GM12878 (cell line): ENCODE measurements at regions of chr21 and their contacts with region 1.

Region 1: GRCh38 chr21:25487046-25487594 is 120.2 kb downstream of the MRPL39 start:
- DNase-seq: peak; percentile 96
- ATAC-seq: peak; percentile 80
- H3K4me3 ChIP-seq: peak overlapping the region; percentile 11
- H3K27ac ChIP-seq: peak overlapping the region; percentile 85
- H3K4me1 ChIP-seq: peaks cover 46% of the 10 kb centered on the region
- H3K27me3 ChIP-seq: no peaks in the 10 kb centered on the region
- CTCF ChIP-seq: no peak
- EP300 ChIP-seq: peak; percentile 97 to 98
- POLR2A ChIP-seq: no peak
- RAD21 ChIP-seq: peak; percentile 37; the same call in 1 of the 2 replicates

Region 2: DNA sequence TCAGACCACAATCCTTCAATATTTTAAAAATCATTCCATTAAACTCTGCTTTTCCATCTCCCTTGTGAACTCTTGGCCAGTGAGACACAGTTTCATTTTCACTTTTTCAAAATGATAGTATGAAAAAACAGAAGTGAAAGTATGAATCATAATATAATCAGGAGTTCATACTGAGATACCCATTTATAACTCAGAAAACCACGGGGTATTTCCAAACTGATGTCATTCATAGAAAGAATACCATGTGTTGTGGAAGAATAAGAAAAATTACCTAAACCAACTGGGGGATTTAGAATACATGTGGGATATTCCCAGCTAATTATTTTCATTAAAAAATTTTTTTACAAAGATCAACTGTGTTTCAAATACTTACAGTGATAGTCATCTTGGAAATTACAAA is 29.7 kb before region 1 on chr21:
- CTCF ChIA-PET with region 1: interaction called, 5 read pairs
- POLR2A ChIA-PET with region 1: interaction called, 4 read pairs
- RAD21 ChIA-PET with region 1: interaction called, 20 read pairs
- SMC1A ChIA-PET with region 1: interaction called, 30 read pairs
- in situ Hi-C with region 1: no loop called
- intact Hi-C with region 1: loop called (anchors 1 kb)
- DNase-seq: peak; percentile 83
- ATAC-seq: peak; percentile 60
- H3K4me3 ChIP-seq: no peak overlapping the region
- H3K27ac ChIP-seq: peak overlapping the region; percentile 98
- H3K4me1 ChIP-seq: peaks cover 52% of the 10 kb centered on the region
- H3K27me3 ChIP-seq: no peaks in the 10 kb centered on the region
- CTCF ChIP-seq: no peak
- EP300 ChIP-seq: peak; percentile 100
- POLR2A ChIP-seq: no peak
- RAD21 ChIP-seq: peak; percentile 25; the same call in 1 of the 2 replicates

Region 3: DNA sequence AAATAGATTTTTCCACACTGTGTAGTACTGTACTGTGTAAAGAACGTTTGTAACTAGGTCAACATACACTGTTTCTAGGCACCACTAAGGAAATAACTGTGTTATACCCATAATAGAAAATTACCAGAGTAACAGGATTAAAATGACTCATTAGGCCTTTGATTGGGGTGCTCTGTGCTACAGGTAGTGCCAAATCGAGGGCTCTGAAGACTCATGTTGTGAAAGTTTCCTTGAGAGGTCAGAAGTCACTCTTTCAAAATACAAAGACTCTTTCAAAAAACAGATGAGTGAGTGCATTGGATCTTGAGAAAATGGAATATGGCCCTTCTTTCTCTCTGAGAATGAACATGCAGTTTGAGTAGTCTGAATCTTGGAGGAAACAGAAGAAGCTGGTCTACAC is 22.8 kb before region 1 on chr21:
- CTCF ChIA-PET with region 1: interaction called, 5 read pairs
- POLR2A ChIA-PET with region 1: interaction called, 4 read pairs
- RAD21 ChIA-PET with region 1: interaction called, 8 read pairs
- SMC1A ChIA-PET with region 1: interaction called, 39 read pairs
- in situ Hi-C with region 1: no loop called
- intact Hi-C with region 1: loop called (anchors 1 kb)
- DNase-seq: no peak
- ATAC-seq: peak; percentile 76
- H3K4me3 ChIP-seq: peak overlapping the region; percentile 22; the same call in 1 of the 2 replicates
- H3K27ac ChIP-seq: peak overlapping the region; percentile 87
- H3K4me1 ChIP-seq: peaks cover 41% of the 10 kb centered on the region
- H3K27me3 ChIP-seq: no peaks in the 10 kb centered on the region
- CTCF ChIP-seq: no peak
- EP300 ChIP-seq: peak; percentile 69 to 94; a peak in 3 of 4 replicates
- POLR2A ChIP-seq: no peak
- RAD21 ChIP-seq: no peak

Region 4: GRCh38 chr21:25501996-25502665 is 15.0 kb after region 1 on chr21:
- CTCF ChIA-PET with region 1: interaction called, 11 read pairs
- POLR2A ChIA-PET with region 1: interaction called, 18 read pairs
- RAD21 ChIA-PET with region 1: interaction called, 18 read pairs
- SMC1A ChIA-PET with region 1: interaction called, 61 read pairs
- in situ Hi-C with region 1: no loop called
- intact Hi-C with region 1: loop called (anchors 1 kb)
- DNase-seq: peak; percentile 87
- ATAC-seq: peak; percentile 78
- H3K4me3 ChIP-seq: no peak overlapping the region
- H3K27ac ChIP-seq: peak overlapping the region; percentile 83
- H3K4me1 ChIP-seq: peaks cover 31% of the 10 kb centered on the region
- H3K27me3 ChIP-seq: no peaks in the 10 kb centered on the region
- CTCF ChIP-seq: no peak
- EP300 ChIP-seq: peak; percentile 8 to 26; a peak in 2 of 4 replicates
- POLR2A ChIP-seq: no peak
- RAD21 ChIP-seq: peak; percentile 17; the same call in 1 of the 2 replicates

Region 5: DNA sequence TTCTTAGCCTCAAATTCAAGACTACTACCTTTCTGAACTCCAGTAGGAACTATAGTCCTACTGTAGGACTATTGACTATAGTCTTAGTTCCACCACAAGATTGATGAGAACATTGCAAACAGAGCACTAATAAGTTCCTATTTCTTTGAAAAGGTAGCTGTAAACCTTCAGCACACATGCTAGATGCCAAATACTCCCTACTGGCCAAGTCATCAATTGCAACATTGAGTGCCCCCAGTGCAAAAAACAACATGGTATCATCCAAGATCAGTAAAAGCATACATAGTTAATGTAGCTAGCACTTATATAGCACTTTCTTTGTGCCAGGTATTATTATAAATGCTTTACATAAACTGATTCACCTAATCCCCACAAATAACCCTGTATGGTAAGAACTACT is 20.4 kb after region 1 on chr21:
- CTCF ChIA-PET with region 1: interaction called, 4 read pairs
- POLR2A ChIA-PET with region 1: interaction called, 18 read pairs
- RAD21 ChIA-PET with region 1: interaction called, 16 read pairs
- SMC1A ChIA-PET with region 1: interaction called, 61 read pairs
- in situ Hi-C with region 1: no loop called
- intact Hi-C with region 1: loop called (anchors 1 kb)
- DNase-seq: no peak
- ATAC-seq: peak; percentile 57
- H3K4me3 ChIP-seq: no peak overlapping the region
- H3K27ac ChIP-seq: peak overlapping the region; percentile 95
- H3K4me1 ChIP-seq: peaks cover 41% of the 10 kb centered on the region
- H3K27me3 ChIP-seq: no peaks in the 10 kb centered on the region
- CTCF ChIP-seq: peak; percentile 19 to 52 (median 31); a peak in 4 of 6 replicates
- EP300 ChIP-seq: no peak
- POLR2A ChIP-seq: no peak
- RAD21 ChIP-seq: peak; percentile 60

Region 6: GRCh38 chr21:25568246-25568645 is 81.1 kb after region 1 on chr21:
- CTCF ChIA-PET with region 1: no interaction called
- POLR2A ChIA-PET with region 1: no interaction called
- RAD21 ChIA-PET with region 1: interaction called, 12 read pairs
- SMC1A ChIA-PET with region 1: interaction called, 17 read pairs
- in situ Hi-C with region 1: no loop called
- intact Hi-C with region 1: no loop called
- DNase-seq: no peak
- ATAC-seq: peak; percentile 12
- H3K4me3 ChIP-seq: peak overlapping the region; percentile 87
- H3K27ac ChIP-seq: peak overlapping the region; percentile 92
- H3K4me1 ChIP-seq: peaks cover 16% of the 10 kb centered on the region; the same call in 1 of the 2 replicates
- H3K27me3 ChIP-seq: no peaks in the 10 kb centered on the region
- CTCF ChIP-seq: no peak
- EP300 ChIP-seq: no peak
- POLR2A ChIP-seq: peak; percentile 88
- RAD21 ChIP-seq: no peak

Region 7: GRCh38 chr21:25573409-25574206 is 86.5 kb after region 1 on chr21:
- CTCF ChIA-PET with region 1: no interaction called
- POLR2A ChIA-PET with region 1: no interaction called
- RAD21 ChIA-PET with region 1: interaction called, 10 read pairs
- SMC1A ChIA-PET with region 1: interaction called, 14 read pairs
- in situ Hi-C with region 1: no loop called
- intact Hi-C with region 1: no loop called
- DNase-seq: peak; percentile 81
- ATAC-seq: peak; percentile 38
- H3K4me3 ChIP-seq: peak overlapping the region; percentile 14; the same call in 1 of the 2 replicates
- H3K27ac ChIP-seq: peak overlapping the region; percentile 92
- H3K4me1 ChIP-seq: peaks cover 38% of the 10 kb centered on the region
- H3K27me3 ChIP-seq: no peaks in the 10 kb centered on the region
- CTCF ChIP-seq: no peak
- EP300 ChIP-seq: no peak
- POLR2A ChIP-seq: peak; percentile 80
- RAD21 ChIP-seq: no peak

Region 8: DNA sequence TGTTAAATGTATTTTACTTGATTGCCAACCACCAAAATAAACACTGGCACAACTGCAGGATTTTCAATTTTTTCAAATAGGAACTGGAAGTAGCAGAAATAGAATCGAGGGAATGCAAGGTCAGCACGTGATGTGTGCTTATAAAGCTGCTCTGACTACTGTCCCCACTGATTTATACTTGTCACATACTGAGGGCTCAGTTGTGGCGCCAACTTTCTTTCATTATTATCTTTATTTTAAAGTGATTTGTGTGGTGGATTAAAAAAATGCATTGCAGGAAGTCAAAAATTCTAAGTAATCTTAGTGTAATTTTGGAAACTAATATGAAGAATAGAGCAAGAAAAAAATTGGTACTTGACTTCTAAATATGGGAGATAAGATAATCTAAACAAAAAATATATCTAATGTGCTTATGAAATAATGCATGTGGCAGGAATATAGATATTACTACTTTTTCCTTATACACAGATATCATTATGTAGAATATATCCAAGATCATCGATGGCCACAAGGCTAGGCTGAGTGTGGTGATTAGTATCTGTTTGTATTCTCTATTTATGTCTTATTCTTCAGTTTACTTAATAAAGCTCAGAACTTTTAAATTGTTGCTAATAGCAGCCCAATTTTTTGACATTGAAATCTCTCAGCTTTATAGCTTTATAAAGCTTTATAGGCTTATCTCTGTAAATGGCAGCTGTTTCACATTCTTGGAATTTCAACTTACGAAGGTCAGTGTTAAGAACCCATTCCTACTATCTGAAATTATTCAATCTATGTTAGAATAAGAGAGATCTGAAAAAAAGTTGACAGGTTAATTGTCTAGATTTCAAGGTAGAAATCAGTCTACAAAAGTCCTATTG is 1884.2 kb after region 1 on chr21:
- CTCF ChIA-PET with region 1: no interaction called
- POLR2A ChIA-PET with region 1: no interaction called
- RAD21 ChIA-PET with region 1: no interaction called
- SMC1A ChIA-PET with region 1: no interaction called
- in situ Hi-C with region 1: no loop called
- intact Hi-C with region 1: no loop called
- DNase-seq: no peak
- ATAC-seq: no peak
- H3K4me3 ChIP-seq: no peak overlapping the region
- H3K27ac ChIP-seq: no peak overlapping the region
- H3K4me1 ChIP-seq: no peaks in the 10 kb centered on the region
- H3K27me3 ChIP-seq: no peaks in the 10 kb centered on the region
- CTCF ChIP-seq: no peak
- EP300 ChIP-seq: no peak
- POLR2A ChIP-seq: no peak
- RAD21 ChIP-seq: no peak